ENCODE measurements at regions of chr2 and their contacts with region 1.

Region 1: GRCh38 chr2:21715887-21716286 is 592.1 kb downstream of the TDRD15 start:
- DNase-seq: no peak
- ATAC-seq: peak; percentile 59 to 73

Region 2: DNA sequence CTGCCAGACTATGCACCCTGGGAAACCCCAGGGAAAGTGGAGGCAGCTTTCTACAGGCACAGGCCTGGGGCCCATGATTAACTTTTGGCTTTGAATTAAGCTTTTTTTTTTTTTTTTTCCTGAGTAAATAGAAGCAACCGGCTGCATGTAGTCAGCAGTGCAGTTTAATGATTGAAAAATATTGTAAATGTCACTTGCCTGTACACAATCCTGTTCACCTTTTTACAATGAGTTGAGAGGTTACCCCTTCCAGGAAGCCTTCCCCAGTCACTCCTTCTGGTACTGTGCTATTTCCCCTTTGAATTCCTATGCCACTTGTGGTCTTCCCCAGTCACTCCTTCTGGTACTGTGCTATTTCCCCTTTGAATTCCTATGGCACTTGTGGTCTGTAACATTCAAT is 116.5 kb before region 1 on chr2:
- intact Hi-C with region 1: no loop called
- DNase-seq: no peak
- ATAC-seq: no peak

Region 3: DNA sequence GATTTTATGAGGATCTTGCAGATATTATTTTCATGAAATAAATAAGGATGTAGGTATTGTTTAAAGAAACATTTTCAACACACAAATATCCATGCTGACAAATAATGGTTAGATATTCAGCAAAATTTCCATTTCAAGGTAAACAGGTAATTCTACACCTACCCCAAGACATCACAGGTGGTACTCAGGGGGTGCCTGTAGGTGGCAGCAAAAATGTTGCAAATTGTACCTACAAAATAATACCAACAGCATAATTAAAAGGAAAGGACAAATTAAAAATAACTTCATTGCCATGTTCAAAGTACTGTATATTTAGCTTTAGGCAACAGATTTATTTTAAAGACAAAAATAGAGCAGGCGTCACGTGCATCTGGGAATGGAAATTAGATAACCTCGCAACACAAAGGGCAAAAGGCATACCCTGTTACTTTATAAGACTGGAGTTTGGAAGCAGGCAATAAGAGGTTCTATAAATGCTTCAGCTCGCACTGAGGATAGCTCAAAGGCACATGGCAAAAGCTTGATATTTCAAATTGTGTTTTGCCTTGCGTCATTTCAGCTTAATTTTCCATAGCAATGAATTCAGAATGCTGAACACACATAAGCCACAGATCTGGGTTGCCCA is 38.4 kb after region 1 on chr2:
- intact Hi-C with region 1: loop called in 1 of 2 experiments (anchors 5 kb)
- DNase-seq: no peak
- ATAC-seq: no peak

Measured in left cardiac atrium (tissue), 4 donors.